ENCODE measurements at regions of chr15 and their contacts with region 1.

Region 1: GRCh38 chr15:40367686-40368611 is 9.9 kb downstream of the DISP2 start:
- DNase-seq: peak; percentile 80 to 94 (median 88)
- H3K4me3 ChIP-seq: peak overlapping the region in 1 of 4 donors; percentile 32
- H3K27ac ChIP-seq: peak overlapping the region in 1 of 5 donors; percentile 17
- H3K4me1 ChIP-seq: peaks cover 0 to 14% of the 10 kb centered on the region in 2 donors
- H3K27me3 ChIP-seq: no peaks in the 10 kb centered on the region
- CTCF ChIP-seq: peak; percentile 60 to 94 (median 81)
- POLR2A ChIP-seq: no peak

Region 2: DNA sequence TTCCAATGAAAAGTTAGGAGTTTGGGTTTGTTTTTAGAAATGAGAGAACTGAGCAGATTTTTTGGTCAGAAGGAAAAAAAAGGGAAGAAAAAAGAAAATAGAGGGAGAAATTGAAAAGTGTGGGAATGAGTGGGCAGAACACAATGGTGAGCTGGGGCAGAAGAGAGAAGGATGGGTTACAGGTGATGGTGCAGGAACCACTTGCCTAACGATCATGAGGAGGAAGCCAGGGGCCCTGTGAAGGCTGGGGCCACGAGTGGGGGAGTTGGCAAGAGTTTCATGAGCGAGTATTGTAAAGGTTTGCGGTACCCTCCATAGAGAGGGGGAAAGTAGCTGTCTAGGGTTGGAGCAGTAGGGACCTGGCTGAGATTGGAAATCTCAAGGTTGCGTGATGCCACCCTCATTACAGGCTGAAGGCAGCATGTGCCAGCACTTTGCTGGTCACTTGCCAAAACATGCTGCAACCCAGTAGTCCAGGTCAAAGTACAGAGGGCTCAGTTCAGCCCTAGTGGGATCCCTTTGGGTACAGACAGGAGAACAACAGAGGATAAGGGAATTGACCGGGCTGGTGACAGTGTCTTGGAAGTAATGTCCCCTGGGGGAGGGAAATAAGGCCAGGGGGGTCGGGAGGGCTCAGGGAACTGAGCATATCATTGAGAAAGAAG is 44.3 kb after region 1 on chr15:
- intact Hi-C with region 1: loop called (anchors 2 to 10 kb)
- DNase-seq: peak; percentile 51 to 86 (median 75)
- H3K4me3 ChIP-seq: no peak overlapping the region
- H3K27ac ChIP-seq: no peak overlapping the region
- H3K4me1 ChIP-seq: peaks cover 7 to 16% of the 10 kb centered on the region in 2 donors
- H3K27me3 ChIP-seq: no peaks in the 10 kb centered on the region
- CTCF ChIP-seq: no peak
- POLR2A ChIP-seq: no peak

Region 3: DNA sequence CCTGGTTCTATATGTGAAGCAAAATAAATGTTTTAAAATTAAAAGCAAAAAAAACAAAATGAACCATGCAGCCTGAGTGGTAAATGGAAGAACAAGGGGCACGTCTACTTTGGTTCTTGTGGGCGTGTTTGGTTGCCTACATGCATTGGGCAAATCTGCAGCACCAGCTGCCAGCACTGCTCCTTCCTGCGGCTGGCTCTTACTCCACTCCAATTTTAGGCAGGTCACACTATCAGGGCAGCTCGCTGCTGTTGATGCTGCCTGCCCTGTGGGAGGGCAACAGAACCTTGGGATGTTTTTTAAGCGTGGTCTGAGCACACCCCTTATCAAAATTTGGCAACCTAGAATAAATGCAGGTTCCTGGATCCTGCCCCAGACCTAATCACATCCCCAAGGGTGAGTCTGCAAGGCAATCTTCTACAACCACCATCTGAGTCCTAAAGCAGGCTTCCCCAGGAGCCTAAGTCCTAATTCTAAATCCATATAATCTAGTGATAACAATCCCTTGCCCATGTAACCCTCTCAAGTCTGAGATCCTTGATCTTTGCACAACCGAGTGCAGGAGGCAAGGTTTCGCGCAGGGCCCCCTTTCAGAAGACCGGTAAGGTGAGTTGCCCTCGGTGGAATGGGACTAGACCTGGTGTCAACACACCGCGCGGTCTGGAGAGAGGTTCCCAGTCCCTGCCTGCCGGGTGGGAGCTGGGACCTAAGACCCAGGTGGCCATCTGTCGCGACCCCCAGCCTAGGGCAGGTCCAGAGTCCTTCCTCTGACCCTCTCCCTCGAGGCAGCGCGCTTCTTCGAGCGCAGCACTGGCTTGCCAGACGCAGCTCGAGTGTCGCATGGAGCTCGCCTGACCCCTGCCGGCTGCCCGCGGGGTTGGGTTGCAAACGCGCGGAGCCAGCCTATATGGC is 53.6 kb after region 1 on chr15:
- intact Hi-C with region 1: loop called (anchors 2 to 10 kb)
- DNase-seq: peak; percentile 74 to 87 (median 83)
- H3K4me3 ChIP-seq: no peak overlapping the region
- H3K27ac ChIP-seq: peak overlapping the region in 3 of 5 donors; percentile 30 to 77 (median 43)
- H3K4me1 ChIP-seq: peaks cover 21 to 23% of the 10 kb centered on the region in 2 donors
- H3K27me3 ChIP-seq: no peaks in the 10 kb centered on the region
- CTCF ChIP-seq: peak; percentile 79 to 99 (median 96)
- POLR2A ChIP-seq: no peak

Measured in adrenal gland (tissue), 19 donors.